Activated CD8-positive, alpha-beta T cell treated with anti-CD3 and anti-CD28 coated beads for 36 hours (primary cell): ENCODE measurements at regions of chr5 and their contacts with region 1.

Region 1: GRCh38 chr5:164013077-164013670 is 507.8 kb downstream of the MAT2B start:
- DNase-seq: peak; percentile 57
- ATAC-seq: no peak
- H3K4me3 Mint-ChIP-seq: no peak overlapping the region
- H3K27ac Mint-ChIP-seq: no peak overlapping the region
- H3K4me1 Mint-ChIP-seq: no peaks in the 10 kb centered on the region
- H3K27me3 Mint-ChIP-seq: no peaks in the 10 kb centered on the region
- CTCF ChIP-seq: peak; percentile 57

Region 2: GRCh38 chr5:164504141-164504772 is 491.1 kb after region 1 on chr5:
- CTCF ChIA-PET with region 1: interaction called, 10 read pairs
- POLR2A ChIA-PET with region 1: no interaction called
- intact Hi-C with region 1: loop called (anchors 5 kb)
- DNase-seq: peak; percentile 34
- ATAC-seq: no peak
- H3K4me3 Mint-ChIP-seq: no peak overlapping the region
- H3K27ac Mint-ChIP-seq: no peak overlapping the region
- H3K4me1 Mint-ChIP-seq: no peaks in the 10 kb centered on the region
- H3K27me3 Mint-ChIP-seq: no peaks in the 10 kb centered on the region
- CTCF ChIP-seq: peak; percentile 64